CD4-positive, alpha-beta memory T cell (primary cell): ENCODE measurements at regions of chr19 and their contacts with region 1.

Region 1: GRCh38 chr19:12736995-12737834 is at the start of gene GET3:
- DNase-seq: peak; percentile 87 to 91 (median 89)
- H3K4me3 ChIP-seq: peak within 1 kb of the TSS; percentile 77 to 80
- H3K4me3 Mint-ChIP-seq: peak within 1 kb of the TSS; percentile 98 to 100 (median 99)
- H3K27ac ChIP-seq: peak within 1 kb of the TSS; percentile 87
- H3K27ac Mint-ChIP-seq: peak within 1 kb of the TSS; percentile 94 to 98 (median 97)
- H3K4me1 ChIP-seq: peaks cover 40% of the 10 kb centered on the region
- H3K4me1 Mint-ChIP-seq: peaks cover 25 to 50% (median 36%) of the 10 kb centered on the region in 4 donors
- H3K27me3 ChIP-seq: no peaks in the 10 kb centered on the region
- H3K27me3 Mint-ChIP-seq: peaks cover 0 to 2% of the 10 kb centered on the region in 2 donors
- total RNA-seq, gene GET3: 30.8 to 34.5 TPM

Region 2: DNA sequence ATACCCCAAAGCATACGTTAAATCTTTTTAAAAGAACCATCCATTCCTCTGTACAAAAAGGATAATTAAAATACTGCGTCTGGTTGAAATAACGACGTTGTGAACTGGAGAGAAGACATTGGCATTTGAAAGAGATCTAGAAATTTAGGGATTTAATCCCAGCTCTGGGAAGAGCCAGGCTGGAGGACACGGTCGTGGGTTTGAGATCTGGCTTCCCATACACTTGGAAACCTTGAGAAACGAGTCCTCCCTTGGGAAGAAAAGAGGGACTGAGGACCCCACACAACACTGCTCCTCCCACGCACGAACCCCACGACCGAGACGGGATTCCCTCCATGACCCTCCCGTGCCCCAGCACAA is 253.2 kb before region 1 on chr19:
- CTCF ChIA-PET with region 1: no interaction called
- POLR2A ChIA-PET with region 1: no interaction called
- intact Hi-C with region 1: no loop called
- DNase-seq: no peak
- H3K4me3 ChIP-seq: peak overlapping the region; percentile 91 to 99
- H3K4me3 Mint-ChIP-seq: peak overlapping the region; percentile 94 to 98 (median 96)
- H3K27ac ChIP-seq: peak overlapping the region; percentile 77
- H3K27ac Mint-ChIP-seq: peak overlapping the region in 6 of 7 donors; percentile 33 to 97 (median 94)
- H3K4me1 ChIP-seq: peaks cover 28% of the 10 kb centered on the region
- H3K4me1 Mint-ChIP-seq: peaks cover 23 to 36% (median 28%) of the 10 kb centered on the region in 4 donors
- H3K27me3 ChIP-seq: no peaks in the 10 kb centered on the region
- H3K27me3 Mint-ChIP-seq: no peaks in the 10 kb centered on the region

Region 3: GRCh38 chr19:12681074-12681951 is 55.9 kb before region 1 on chr19 and contains the start of gene DHPS:
- CTCF ChIA-PET with region 1: interaction called, 12 read pairs
- POLR2A ChIA-PET with region 1: interaction called, 11 read pairs
- intact Hi-C with region 1: loop called (anchors 1 kb)
- DNase-seq: peak; percentile 90 to 96 (median 94)
- H3K4me3 ChIP-seq: peak within 1 kb of the TSS; percentile 73 to 98
- H3K4me3 Mint-ChIP-seq: peak within 1 kb of the TSS; percentile 90 to 99 (median 98)
- H3K27ac ChIP-seq: peak within 1 kb of the TSS; percentile 98
- H3K27ac Mint-ChIP-seq: peak within 1 kb of the TSS; percentile 83 to 99 (median 97)
- H3K4me1 ChIP-seq: peaks cover 22% of the 10 kb centered on the region
- H3K4me1 Mint-ChIP-seq: peaks cover 12 to 35% (median 25%) of the 10 kb centered on the region in 4 donors
- H3K27me3 ChIP-seq: no peaks in the 10 kb centered on the region
- H3K27me3 Mint-ChIP-seq: no peaks in the 10 kb centered on the region
- total RNA-seq, gene DHPS: 195 to 197 TPM

Region 4: GRCh38 chr19:12722566-12723380 is 14.4 kb before region 1 on chr19:
- CTCF ChIA-PET with region 1: interaction called, 22 read pairs
- POLR2A ChIA-PET with region 1: interaction called, 135 read pairs
- intact Hi-C with region 1: loop called (anchors 1 kb)
- DNase-seq: peak; percentile 91 to 97 (median 95)
- H3K4me3 ChIP-seq: peak overlapping the region; percentile 21 to 78
- H3K4me3 Mint-ChIP-seq: peak overlapping the region; percentile 87 to 98 (median 92)
- H3K27ac ChIP-seq: peak overlapping the region; percentile 73
- H3K27ac Mint-ChIP-seq: peak overlapping the region; percentile 88 to 98 (median 93)
- H3K4me1 ChIP-seq: peaks cover 30% of the 10 kb centered on the region
- H3K4me1 Mint-ChIP-seq: peaks cover 21 to 54% (median 35%) of the 10 kb centered on the region in 4 donors
- H3K27me3 ChIP-seq: no peaks in the 10 kb centered on the region
- H3K27me3 Mint-ChIP-seq: peaks cover 0 to 1% of the 10 kb centered on the region in 2 donors

Region 5: DNA sequence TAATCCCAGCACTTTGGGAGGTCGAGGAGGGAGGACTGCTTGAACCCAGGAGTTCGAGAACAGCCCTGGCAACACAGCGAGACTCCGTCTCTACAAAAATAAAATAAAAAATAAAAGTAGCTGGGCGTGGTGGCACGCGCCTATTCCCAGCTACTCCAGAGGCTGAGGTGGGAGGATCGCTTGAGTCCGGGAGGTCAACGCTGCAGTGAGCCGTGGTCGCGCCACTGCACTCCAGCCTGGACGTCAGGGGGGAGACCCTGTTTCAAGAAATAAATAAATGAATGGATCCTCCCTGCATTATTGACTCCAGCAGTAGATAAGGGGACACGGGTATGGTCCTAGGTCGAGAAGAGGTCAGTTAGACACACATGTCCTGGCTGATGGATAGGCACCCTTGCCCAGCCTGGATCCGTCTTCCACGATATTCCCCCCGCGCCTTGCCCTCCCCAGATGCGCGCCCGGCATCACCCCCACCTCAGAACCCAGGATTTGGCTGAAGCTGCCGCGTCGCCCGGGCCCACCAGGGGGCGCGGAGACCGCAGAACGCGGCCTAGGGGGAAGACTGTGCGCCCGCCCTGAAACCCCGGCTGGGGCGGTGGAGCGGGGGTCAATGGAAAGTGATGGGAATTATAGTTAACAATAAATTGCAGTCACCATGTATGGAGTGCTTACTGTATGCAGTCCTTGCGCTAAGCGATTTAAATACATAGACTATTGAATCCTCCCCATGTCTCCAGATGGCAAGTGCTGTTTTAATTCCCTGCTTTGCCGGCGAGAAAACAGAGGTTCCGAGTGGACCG is 40.2 kb after region 1 on chr19:
- CTCF ChIA-PET with region 1: interaction called, 3 read pairs
- POLR2A ChIA-PET with region 1: interaction called, 5 read pairs
- intact Hi-C with region 1: loop called (anchors 1 kb)
- DNase-seq: peak; percentile 77 to 83 (median 80)
- H3K4me3 ChIP-seq: peak overlapping the region; percentile 69 to 76
- H3K4me3 Mint-ChIP-seq: peak overlapping the region; percentile 85 to 92 (median 87)
- H3K27ac ChIP-seq: peak overlapping the region; percentile 86
- H3K27ac Mint-ChIP-seq: peak overlapping the region; percentile 92 to 97 (median 94)
- H3K4me1 ChIP-seq: peaks cover 42% of the 10 kb centered on the region
- H3K4me1 Mint-ChIP-seq: peaks cover 25 to 52% (median 35%) of the 10 kb centered on the region in 4 donors
- H3K27me3 ChIP-seq: no peaks in the 10 kb centered on the region
- H3K27me3 Mint-ChIP-seq: no peaks in the 10 kb centered on the region